RWPE1 (cell line): ENCODE measurements at regions of chr11 and their contacts with region 1.

Region 1: GRCh38 chr11:107757661-107758060 is 45.8 kb upstream of the SLN start:
- DNase-seq: no peak
- H3K27ac ChIP-seq: no peak overlapping the region
- CTCF ChIP-seq: no peak

Region 2: DNA sequence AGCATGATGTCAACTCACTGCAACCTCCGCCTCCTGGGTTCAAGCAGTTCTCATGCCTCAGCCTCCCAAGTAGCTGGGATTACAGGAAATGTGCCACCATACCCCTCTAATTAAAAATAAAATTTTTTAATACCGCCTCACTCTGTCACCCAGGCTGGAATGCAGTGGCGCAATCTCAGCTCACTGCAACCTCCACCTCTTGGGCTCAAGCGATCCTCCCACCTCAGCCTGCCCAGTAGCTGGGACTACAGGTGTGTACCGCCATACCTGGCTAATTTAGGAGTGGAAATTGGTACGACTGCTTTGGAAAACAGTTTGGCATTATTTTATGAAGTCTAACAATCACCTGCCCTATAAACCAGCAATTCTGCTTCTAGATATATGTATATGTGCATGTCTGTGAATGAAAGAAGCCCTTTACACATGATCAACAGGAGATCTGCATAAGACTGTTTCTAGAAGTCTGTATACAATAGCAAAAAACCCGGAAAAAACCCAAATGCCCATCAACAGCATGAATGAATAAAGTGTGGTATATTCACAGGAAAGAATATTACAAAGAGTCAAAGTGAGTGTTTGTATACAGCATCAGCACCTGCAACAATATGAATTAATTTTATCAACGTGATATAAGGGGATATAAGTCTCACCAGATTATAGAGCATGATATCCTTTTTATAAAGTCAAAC is 84.9 kb after region 1 on chr11:
- CTCF ChIA-PET with region 1: interaction called, 10 read pairs
- POLR2A ChIA-PET with region 1: no interaction called
- DNase-seq: no peak
- H3K27ac ChIP-seq: peak overlapping the region; percentile 98
- CTCF ChIP-seq: no peak